Caco-2 (cell line): ENCODE measurements at regions of chr11 and their contacts with region 1.

Region 1: GRCh38 chr11:122706291-122707088 is 51.0 kb downstream of the UBASH3B start:
- DNase-seq: peak; percentile 57 to 73
- H3K4me3 ChIP-seq: no peak overlapping the region
- H3K4me3 Mint-ChIP-seq: peak overlapping the region; percentile 7
- H3K27ac Mint-ChIP-seq: peak overlapping the region; percentile 81
- H3K4me1 ChIP-seq: peaks cover 35% of the 10 kb centered on the region
- H3K4me1 Mint-ChIP-seq: peaks cover 35% of the 10 kb centered on the region
- H3K27me3 ChIP-seq: no peaks in the 10 kb centered on the region
- H3K27me3 Mint-ChIP-seq: no peaks in the 10 kb centered on the region
- CTCF ChIP-seq: no peak

Region 2: DNA sequence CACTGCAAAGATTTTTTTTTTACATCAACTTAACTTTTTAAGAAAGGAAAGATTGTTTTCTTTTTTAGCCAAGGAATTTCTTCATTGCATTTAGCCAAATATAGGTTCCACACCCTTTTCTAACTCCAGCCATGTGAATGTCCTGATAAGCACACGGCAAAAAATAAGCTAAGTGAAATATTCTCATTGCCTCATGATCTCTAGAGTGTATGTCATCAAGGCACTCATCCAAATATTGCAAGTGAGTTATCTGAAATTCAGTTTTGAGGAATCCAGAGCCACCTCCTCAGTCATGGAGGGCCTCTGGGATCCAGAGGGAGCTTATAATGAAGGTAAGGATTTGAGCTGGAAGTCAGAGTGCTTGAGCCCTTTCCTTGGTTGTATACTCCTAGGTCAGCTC is 670.5 kb before region 1 on chr11:
- CTCF ChIA-PET with region 1: no interaction called
- POLR2A ChIA-PET with region 1: no interaction called
- intact Hi-C with region 1: no loop called
- DNase-seq: no peak
- H3K4me3 ChIP-seq: no peak overlapping the region
- H3K4me3 Mint-ChIP-seq: no peak overlapping the region
- H3K27ac Mint-ChIP-seq: no peak overlapping the region
- H3K4me1 ChIP-seq: 0 out of 2 replicates have a peak, but pooled peaks cover 6% of the 10 kb centered on the region
- H3K4me1 Mint-ChIP-seq: peaks cover 7% of the 10 kb centered on the region
- H3K27me3 ChIP-seq: no peaks in the 10 kb centered on the region
- H3K27me3 Mint-ChIP-seq: peaks cover 12% of the 10 kb centered on the region
- CTCF ChIP-seq: no peak

Region 3: GRCh38 chr11:122676638-122677037 is 29.9 kb before region 1 on chr11:
- CTCF ChIA-PET with region 1: no interaction called
- POLR2A ChIA-PET with region 1: no interaction called
- intact Hi-C with region 1: loop called (anchors 1 kb)
- DNase-seq: peak; percentile 78 to 89
- H3K4me3 ChIP-seq: no peak overlapping the region
- H3K4me3 Mint-ChIP-seq: no peak overlapping the region
- H3K27ac Mint-ChIP-seq: peak overlapping the region; percentile 17
- H3K4me1 ChIP-seq: peaks cover 24% of the 10 kb centered on the region
- H3K4me1 Mint-ChIP-seq: peaks cover 18% of the 10 kb centered on the region
- H3K27me3 ChIP-seq: no peaks in the 10 kb centered on the region
- H3K27me3 Mint-ChIP-seq: no peaks in the 10 kb centered on the region
- CTCF ChIP-seq: no peak

Region 4: DNA sequence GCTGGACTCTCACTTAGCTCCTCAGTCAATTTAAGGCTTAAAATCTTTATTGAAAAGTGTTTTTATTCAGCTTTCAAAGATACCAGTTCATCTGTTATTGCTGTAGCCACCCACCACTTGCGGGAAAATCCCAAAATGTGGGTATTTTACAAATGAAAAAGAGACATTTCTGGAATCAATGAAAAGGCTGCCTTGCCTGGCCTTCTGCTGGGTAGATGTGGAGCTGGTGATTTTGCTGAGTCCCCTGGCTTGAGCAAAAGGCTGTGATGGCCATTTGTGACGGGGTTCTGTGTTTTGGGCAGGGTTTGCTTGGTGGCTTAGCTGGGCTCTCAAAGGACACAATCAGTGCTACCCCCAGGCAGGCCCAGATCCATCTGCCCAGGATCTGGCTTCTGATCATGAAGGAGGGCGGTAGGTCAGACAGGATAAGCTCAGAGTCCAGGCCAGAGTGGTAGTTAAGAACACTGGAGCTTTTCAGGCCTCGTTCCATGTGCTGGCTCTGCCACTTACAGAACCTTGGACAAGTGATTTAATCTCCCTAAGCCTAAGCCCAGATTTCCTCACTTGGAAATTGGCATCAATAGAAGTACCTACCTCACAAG is 14.8 kb before region 1 on chr11:
- CTCF ChIA-PET with region 1: no interaction called
- POLR2A ChIA-PET with region 1: no interaction called
- intact Hi-C with region 1: loop called (anchors 2 kb)
- DNase-seq: no peak
- H3K4me3 ChIP-seq: no peak overlapping the region
- H3K4me3 Mint-ChIP-seq: no peak overlapping the region
- H3K27ac Mint-ChIP-seq: no peak overlapping the region
- H3K4me1 ChIP-seq: peaks cover 11% of the 10 kb centered on the region; the same call in 1 of the 2 replicates
- H3K4me1 Mint-ChIP-seq: peaks cover 10% of the 10 kb centered on the region
- H3K27me3 ChIP-seq: no peaks in the 10 kb centered on the region
- H3K27me3 Mint-ChIP-seq: no peaks in the 10 kb centered on the region
- CTCF ChIP-seq: no peak

Region 5: GRCh38 chr11:122733318-122733717 is 26.8 kb after region 1 on chr11:
- CTCF ChIA-PET with region 1: no interaction called
- POLR2A ChIA-PET with region 1: no interaction called
- intact Hi-C with region 1: loop called (anchors 1 kb)
- DNase-seq: no peak
- H3K4me3 ChIP-seq: no peak overlapping the region
- H3K4me3 Mint-ChIP-seq: no peak overlapping the region
- H3K27ac Mint-ChIP-seq: peak overlapping the region; percentile 60
- H3K4me1 ChIP-seq: peaks cover 46% of the 10 kb centered on the region
- H3K4me1 Mint-ChIP-seq: peaks cover 36% of the 10 kb centered on the region
- H3K27me3 ChIP-seq: no peaks in the 10 kb centered on the region
- H3K27me3 Mint-ChIP-seq: no peaks in the 10 kb centered on the region
- CTCF ChIP-seq: no peak